Calu3 (cell line): ENCODE measurements at regions of chr3 and their contacts with region 1.

Region 1: DNA sequence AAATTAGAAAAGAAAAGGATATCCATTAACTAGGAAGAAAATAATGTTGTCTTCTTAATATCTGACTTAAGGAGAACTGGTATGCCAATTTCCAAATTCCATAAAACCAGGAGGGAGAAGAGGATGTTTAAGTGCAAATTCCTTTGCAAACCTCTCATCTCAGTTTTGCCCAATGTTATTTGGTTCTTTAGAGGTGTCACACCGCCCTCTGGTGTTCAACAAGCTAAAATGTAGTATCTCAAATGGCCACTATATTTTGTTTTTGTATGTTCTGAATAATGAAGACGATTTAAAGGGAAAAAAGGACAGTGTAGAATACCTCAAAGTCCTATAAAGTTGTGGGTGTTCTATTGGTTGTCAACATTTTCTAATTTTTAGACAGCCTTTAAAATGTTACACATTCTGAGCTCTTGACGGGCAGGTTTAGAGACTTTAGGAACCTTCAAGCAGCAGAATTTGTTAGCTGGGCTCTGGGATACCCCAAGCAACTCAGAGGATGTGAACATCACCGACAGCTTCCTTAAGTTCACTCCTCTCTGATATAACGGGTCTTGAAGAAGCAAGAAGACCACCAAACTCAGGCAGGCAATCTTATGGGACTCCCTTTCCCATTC is 458.3 kb downstream of the MFSD1 start:
- DNase-seq: peak; percentile 78
- H3K4me3 Mint-ChIP-seq: no peak overlapping the region
- H3K27ac Mint-ChIP-seq: no peak overlapping the region
- H3K4me1 Mint-ChIP-seq: no peaks in the 10 kb centered on the region
- H3K27me3 Mint-ChIP-seq: peaks cover 15% of the 10 kb centered on the region
- CTCF ChIP-seq: peak; percentile 78

Region 2: DNA sequence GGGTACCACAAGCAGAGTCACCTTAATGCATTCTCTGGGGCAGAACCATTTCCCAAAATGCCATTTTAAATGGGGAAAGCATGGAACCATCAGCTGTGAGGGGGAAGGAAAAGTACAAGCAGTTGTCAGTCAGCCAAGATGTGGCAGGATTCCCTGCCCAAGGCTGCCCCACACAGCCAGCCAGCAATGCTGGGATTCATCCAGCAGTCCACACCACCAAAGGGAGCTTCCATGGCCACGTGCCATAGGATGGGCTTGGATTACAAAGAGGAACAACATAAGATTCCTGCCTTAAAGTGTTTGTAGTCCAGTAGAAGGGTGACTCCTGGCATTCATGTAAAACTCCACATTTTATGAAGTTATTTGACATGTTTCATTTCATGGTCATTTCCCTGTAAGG is 1387.3 kb before region 1 on chr3:
- CTCF ChIA-PET with region 1: no interaction called
- intact Hi-C with region 1: no loop called
- DNase-seq: no peak
- H3K4me3 Mint-ChIP-seq: no peak overlapping the region
- H3K27ac Mint-ChIP-seq: no peak overlapping the region
- H3K4me1 Mint-ChIP-seq: no peaks in the 10 kb centered on the region
- H3K27me3 Mint-ChIP-seq: no peaks in the 10 kb centered on the region
- CTCF ChIP-seq: no peak

Region 3: DNA sequence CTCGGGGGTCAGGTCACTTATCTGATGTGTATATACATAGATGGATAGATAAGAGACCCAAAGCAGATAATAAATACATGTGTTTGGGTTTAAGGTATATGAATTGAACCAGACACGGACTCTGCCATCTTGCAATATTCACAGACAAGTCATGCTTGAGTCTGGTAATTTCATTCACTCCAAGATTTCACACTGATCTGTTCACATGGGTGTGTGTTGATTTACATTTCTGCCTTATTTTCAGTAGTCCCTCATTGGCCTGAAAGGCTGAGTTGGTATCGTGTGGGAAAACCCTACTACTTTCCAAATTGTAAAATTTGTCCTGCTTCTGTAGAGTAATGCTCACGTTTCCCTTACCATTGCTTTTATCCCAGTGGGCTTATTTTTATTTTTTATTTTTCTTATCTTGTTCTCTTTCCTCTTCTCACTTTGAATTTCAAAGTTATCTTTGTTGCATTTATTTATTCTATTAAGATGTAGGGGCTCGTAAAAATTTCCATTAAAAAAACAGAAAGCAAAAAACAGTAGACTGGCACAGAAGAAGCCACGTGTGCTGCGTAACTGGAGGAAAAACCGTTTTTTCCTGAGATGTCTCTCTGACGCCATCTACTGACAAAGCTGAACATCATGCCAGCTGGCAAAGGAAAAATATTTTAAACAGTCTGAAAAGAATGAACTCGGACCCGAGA is 469.1 kb before region 1 on chr3:
- CTCF ChIA-PET with region 1: interaction called, 16 read pairs
- intact Hi-C with region 1: loop called (anchors 2 kb)
- DNase-seq: peak; percentile 60
- H3K4me3 Mint-ChIP-seq: peak overlapping the region; percentile 22
- H3K27ac Mint-ChIP-seq: peak overlapping the region; percentile 66
- H3K4me1 Mint-ChIP-seq: peaks cover 62% of the 10 kb centered on the region
- H3K27me3 Mint-ChIP-seq: no peaks in the 10 kb centered on the region
- CTCF ChIP-seq: peak; percentile 94

Region 4: DNA sequence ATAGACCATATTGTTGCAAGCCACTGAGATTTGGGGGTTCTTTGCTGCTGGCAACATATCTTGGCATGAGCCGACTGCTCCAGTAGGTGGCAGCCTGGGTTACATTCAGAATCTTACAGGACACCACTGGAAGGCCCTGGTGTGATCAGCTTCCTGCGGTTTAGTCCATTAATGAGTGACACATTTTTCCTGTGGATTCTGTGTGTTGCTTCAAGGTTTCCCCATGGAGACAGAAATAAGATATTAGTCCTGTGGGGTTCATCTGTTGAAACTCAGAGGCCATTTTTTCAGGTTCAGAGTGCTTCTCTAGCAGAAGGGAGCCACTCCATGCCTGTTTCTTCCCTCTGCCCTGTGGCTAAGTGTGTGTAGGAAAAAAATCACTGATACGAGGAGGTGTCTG is 342.1 kb before region 1 on chr3:
- CTCF ChIA-PET with region 1: interaction called, 10 read pairs
- intact Hi-C with region 1: loop called (anchors 2 kb)
- DNase-seq: peak; percentile 89
- H3K4me3 Mint-ChIP-seq: no peak overlapping the region
- H3K27ac Mint-ChIP-seq: peak overlapping the region; percentile 16
- H3K4me1 Mint-ChIP-seq: peaks cover 9% of the 10 kb centered on the region
- H3K27me3 Mint-ChIP-seq: peaks cover 10% of the 10 kb centered on the region
- CTCF ChIP-seq: peak; percentile 94

Region 5: DNA sequence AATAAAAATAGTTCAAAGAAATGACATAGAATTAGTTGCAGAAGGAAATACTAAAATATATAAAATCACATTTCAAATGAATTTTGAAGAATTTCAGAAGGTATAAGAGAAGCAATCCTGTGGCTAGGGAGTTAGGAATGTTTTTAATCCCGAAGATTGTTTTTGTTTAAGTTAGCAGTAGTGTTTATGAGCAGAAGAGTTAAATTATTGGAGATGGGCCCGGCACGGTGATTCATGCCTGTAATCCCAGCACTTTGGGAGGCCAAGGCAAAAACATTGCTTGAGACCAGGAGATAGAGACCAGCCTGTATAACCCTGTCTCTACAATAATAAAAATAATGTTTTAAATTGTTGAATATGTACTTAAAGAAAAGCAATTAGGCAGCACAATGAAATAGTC is 25.9 kb before region 1 on chr3:
- CTCF ChIA-PET with region 1: no interaction called
- intact Hi-C with region 1: no loop called
- DNase-seq: no peak
- H3K4me3 Mint-ChIP-seq: no peak overlapping the region
- H3K27ac Mint-ChIP-seq: no peak overlapping the region
- H3K4me1 Mint-ChIP-seq: peaks cover 30% of the 10 kb centered on the region
- H3K27me3 Mint-ChIP-seq: no peaks in the 10 kb centered on the region
- CTCF ChIP-seq: no peak

Region 6: GRCh38 chr3:159503944-159504343 is 243.8 kb after region 1 on chr3:
- CTCF ChIA-PET with region 1: no interaction called
- intact Hi-C with region 1: loop called (anchors 2 kb)
- DNase-seq: no peak
- H3K4me3 Mint-ChIP-seq: no peak overlapping the region
- H3K27ac Mint-ChIP-seq: no peak overlapping the region
- H3K4me1 Mint-ChIP-seq: no peaks in the 10 kb centered on the region
- H3K27me3 Mint-ChIP-seq: peaks cover 6% of the 10 kb centered on the region
- CTCF ChIP-seq: no peak

Region 7: DNA sequence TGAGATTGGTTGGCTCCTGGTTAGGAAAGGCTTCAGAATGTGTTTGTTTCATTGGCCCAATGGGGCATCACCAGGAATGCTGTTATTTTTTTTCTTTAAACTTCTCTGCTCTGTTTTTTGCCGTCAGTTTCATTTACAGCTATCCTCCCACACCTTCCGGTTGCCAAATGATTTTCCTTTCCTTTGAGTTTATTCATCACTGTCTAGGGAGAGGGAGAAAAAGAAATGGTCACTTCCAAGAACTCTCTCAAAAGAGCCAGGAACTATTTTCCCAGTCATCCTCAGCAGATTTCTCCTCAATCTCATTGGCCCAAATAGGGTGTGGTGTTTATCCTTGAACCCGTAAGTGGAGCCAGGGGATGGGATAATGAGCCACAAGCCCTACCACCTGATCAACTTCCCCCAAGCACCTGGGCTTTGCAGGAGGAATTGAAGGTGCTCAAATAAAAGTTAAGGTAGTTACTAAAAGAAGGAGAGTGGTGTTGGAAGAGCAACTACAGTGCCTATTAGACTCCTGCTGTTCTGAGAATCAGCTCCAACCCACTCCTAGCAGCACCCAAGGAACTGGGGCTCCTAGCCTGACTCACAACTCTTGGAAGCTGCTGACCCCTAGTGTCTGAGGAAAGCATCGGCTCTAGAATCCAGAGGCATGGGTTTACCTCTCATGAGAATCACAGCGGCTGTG is 544.7 kb after region 1 on chr3:
- CTCF ChIA-PET with region 1: interaction called, 22 read pairs
- intact Hi-C with region 1: loop called (anchors 1 kb)
- DNase-seq: peak; percentile 84
- H3K4me3 Mint-ChIP-seq: no peak overlapping the region
- H3K27ac Mint-ChIP-seq: no peak overlapping the region
- H3K4me1 Mint-ChIP-seq: peaks cover 37% of the 10 kb centered on the region
- H3K27me3 Mint-ChIP-seq: no peaks in the 10 kb centered on the region
- CTCF ChIP-seq: peak; percentile 97

Region 8: GRCh38 chr3:160003520-160004128 is 743.5 kb after region 1 on chr3:
- CTCF ChIA-PET with region 1: interaction called, 3 read pairs
- intact Hi-C with region 1: loop called (anchors 1 kb)
- DNase-seq: peak; percentile 85
- H3K4me3 Mint-ChIP-seq: no peak overlapping the region
- H3K27ac Mint-ChIP-seq: no peak overlapping the region
- H3K4me1 Mint-ChIP-seq: no peaks in the 10 kb centered on the region
- H3K27me3 Mint-ChIP-seq: no peaks in the 10 kb centered on the region
- CTCF ChIP-seq: peak; percentile 91